Left colon (tissue), 2 donors: ENCODE measurements at regions of chr2 and their contacts with region 1.

Region 1: GRCh38 chr2:232444409-232445148 is 11.4 kb upstream of the ALPI start:
- DNase-seq: peak in 1 of 2 donors; percentile 57
- ATAC-seq: peak; percentile 45

Region 2: DNA sequence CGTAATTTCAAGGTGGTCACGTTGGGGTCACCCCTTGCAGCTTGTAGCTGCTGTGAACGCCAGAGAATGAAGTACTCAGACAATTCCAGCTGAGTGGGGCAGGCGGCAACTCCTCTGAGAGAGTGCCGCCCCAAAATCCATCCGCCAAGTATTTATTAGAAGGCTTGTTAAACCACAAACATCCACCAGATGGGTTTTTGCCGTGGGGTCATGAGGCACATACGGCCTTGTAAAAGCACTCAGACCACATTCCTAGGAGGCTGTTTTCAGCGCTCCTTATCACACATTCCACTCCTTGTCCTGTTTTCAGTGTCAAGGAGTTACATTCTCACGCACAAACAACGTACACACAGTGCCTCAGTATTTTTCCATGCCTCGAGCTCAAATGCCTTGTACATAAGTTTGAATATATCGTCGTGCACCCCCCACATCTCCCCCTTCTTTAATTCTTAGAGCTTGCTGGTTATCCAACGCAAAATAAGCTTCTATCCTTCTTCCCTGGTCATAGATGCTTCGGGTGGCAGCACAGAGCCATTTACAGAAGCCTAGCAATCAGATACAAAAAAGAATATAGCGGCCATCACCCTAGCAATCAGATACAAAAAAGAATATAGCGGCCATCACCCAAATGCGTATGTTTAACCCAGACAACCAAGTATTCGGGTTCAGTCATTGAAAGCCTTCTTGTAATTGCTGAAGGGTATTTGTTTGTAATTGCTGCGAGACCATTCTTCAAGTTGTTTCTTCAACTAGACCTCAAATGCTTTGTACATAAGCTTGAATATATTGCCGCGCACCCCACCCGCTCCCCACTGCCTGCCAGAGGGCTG is 58.7 kb before region 1 on chr2:
- intact Hi-C with region 1: no loop called
- DNase-seq: no peak
- ATAC-seq: no peak

Region 3: GRCh38 chr2:232519581-232520438 is 75.2 kb after region 1 on chr2 and contains the start of gene PRSS56:
- intact Hi-C with region 1: loop called in 1 of 2 experiments (anchors 5 kb)
- DNase-seq: no peak
- ATAC-seq: no peak
- total RNA-seq, gene PRSS56: not detected

Region 4: GRCh38 chr2:232587512-232587911 is 142.9 kb after region 1 on chr2:
- intact Hi-C with region 1: no loop called
- DNase-seq: no peak
- ATAC-seq: no peak